Aorta (tissue), 5 donors: ENCODE measurements at regions of chr11 and their contacts with region 1.

Region 1: GRCh38 chr11:119284344-119285157 is 32.4 kb downstream of the MCAM start:
- DNase-seq: no peak
- ATAC-seq: peak; percentile 71
- H3K4me3 ChIP-seq: no peak overlapping the region
- H3K27ac ChIP-seq: no peak overlapping the region
- H3K4me1 ChIP-seq: no peaks in the 10 kb centered on the region
- H3K27me3 ChIP-seq: no peaks in the 10 kb centered on the region

Region 2: GRCh38 chr11:119205574-119206510 is 78.7 kb before region 1 on chr11 and contains the start of gene CBL:
- intact Hi-C with region 1: loop called in 1 of 2 experiments (anchors 5 kb)
- DNase-seq: peak; percentile 97 to 99
- ATAC-seq: peak; percentile 98
- H3K4me3 ChIP-seq: peak within 1 kb of the TSS; percentile 85 to 99
- H3K27ac ChIP-seq: peak within 1 kb of the TSS; percentile 32 to 91
- H3K4me1 ChIP-seq: peaks cover 0 to 2% of the 10 kb centered on the region in 2 donors
- H3K27me3 ChIP-seq: no peaks in the 10 kb centered on the region
- total RNA-seq, gene CBL: 33.0 to 37.4 TPM